Adrenal gland (tissue), 19 donors: ENCODE measurements at regions of chr19 and their contacts with region 1.

Region 1: DNA sequence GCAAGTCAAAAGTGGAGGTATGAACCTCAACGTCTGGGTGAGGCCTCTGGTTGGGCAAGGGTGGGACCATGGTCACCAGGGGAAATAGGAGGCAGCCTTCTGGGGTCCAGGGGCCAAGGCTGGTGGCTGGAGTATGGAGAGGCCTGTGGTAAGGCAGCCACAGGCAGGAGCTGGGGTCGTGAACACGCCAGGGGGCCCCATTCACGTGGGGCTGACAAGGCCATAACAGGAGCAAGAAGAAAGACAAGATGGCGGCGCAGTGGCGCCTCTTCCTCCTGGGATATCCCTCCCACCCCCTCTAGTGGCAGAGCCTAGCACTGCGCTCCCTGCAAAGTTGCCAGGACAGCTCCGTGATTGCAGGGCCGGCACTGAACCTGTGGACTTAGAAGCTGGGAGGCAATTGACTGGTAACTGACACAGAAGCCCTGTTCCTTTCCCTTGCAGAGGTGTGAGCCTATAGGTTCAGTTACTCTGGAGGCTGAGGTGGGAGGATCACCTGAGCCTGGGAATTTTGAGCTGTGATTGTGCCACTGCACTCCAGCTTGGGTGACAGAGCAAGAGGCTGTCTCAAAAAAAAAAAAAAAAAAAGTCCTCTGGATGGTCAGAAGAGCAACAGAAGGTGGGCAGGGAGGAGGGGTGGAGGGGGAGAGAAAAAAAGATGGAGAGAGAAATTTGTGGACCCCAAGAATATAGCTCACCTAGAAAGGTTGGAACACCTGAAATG is 19.7 kb upstream of the EDDM13 start:
- DNase-seq: peak; percentile 80 to 91 (median 88)
- H3K4me3 ChIP-seq: no peak overlapping the region
- H3K27ac ChIP-seq: no peak overlapping the region
- H3K4me1 ChIP-seq: no peaks in the 10 kb centered on the region
- H3K27me3 ChIP-seq: no peaks in the 10 kb centered on the region
- CTCF ChIP-seq: peak; percentile 80 to 90 (median 88)
- POLR2A ChIP-seq: no peak

Region 2: GRCh38 chr19:56291867-56292266 is 39.0 kb after region 1 on chr19:
- intact Hi-C with region 1: no loop called
- DNase-seq: no peak
- H3K4me3 ChIP-seq: no peak overlapping the region
- H3K27ac ChIP-seq: no peak overlapping the region
- H3K4me1 ChIP-seq: no peaks in the 10 kb centered on the region
- H3K27me3 ChIP-seq: no peaks in the 10 kb centered on the region
- CTCF ChIP-seq: no peak
- POLR2A ChIP-seq: no peak

Region 3: DNA sequence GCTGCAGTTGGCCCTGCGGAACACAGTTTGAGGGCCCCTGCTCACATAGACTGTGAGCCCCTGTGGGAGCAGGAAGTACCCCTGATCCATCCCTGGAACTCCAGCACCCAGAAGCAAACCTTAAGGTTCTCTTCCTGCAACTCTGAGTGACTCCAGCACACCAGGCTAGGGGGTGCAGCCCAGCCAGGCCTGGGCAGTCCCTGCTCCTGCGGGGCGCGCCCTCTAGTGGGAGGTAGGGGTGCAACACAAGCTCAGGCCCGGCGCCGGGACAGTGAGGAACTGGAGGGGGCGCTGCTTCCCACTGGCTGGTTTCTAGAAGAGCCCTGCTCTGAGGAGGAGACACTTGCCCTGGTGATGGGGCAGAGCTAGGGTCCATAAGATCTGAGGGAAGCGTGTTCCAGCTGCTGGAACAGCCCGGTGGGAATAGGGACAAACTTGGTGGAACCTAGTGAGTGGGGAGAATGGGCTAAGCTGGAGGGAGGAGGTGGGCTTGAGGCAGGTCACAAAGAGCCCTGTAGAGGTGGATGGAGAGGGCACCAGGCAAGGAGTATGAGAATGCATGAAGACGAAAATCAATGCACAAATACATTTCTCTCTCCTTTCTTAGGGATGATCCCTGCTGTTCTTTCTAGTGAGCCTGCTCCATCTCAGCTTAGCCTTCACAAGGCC is 56.8 kb after region 1 on chr19:
- intact Hi-C with region 1: loop called in 1 of 2 experiments (anchors 10 kb)
- DNase-seq: peak; percentile 39 to 71 (median 63)
- H3K4me3 ChIP-seq: no peak overlapping the region
- H3K27ac ChIP-seq: no peak overlapping the region
- H3K4me1 ChIP-seq: peaks cover 0 to 16% of the 10 kb centered on the region in 2 donors
- H3K27me3 ChIP-seq: no peaks in the 10 kb centered on the region
- CTCF ChIP-seq: peak; percentile 58 to 68 (median 66)
- POLR2A ChIP-seq: no peak

Region 4: DNA sequence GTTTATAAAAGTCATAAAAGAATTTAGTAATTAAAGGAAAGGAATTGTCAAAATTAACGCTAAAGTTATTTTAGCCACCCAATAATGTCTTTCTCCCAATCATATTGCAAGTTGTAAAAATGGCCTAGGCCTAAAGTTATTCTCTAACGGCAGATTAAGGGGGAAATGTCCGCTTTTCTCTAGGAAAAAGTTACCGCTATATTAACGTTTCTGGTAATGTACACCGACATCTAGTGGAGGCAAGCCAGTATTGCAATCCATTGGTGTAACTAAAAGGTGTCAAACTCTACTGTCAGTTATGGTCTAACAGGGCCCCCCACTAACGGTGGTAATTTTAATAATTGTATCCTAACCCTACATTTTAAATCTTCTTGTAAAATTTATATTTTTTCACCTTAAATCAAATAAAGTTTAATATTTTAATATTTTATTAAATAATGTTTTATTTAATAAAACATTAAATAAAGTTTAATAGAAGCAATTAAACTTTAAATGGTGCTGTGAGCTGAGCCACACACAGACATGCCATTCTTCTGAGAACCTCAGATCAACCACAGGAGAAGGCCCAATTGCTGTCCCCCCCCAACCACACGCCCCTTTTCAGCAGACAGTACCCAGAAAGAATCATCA is 97.7 kb after region 1 on chr19:
- intact Hi-C with region 1: loop called in 1 of 2 experiments (anchors 5 kb)
- DNase-seq: peak in 6 of 7 donors; percentile 16 to 72 (median 44)
- H3K4me3 ChIP-seq: no peak overlapping the region
- H3K27ac ChIP-seq: no peak overlapping the region
- H3K4me1 ChIP-seq: no peaks in the 10 kb centered on the region
- H3K27me3 ChIP-seq: no peaks in the 10 kb centered on the region
- CTCF ChIP-seq: peak; percentile 55 to 87 (median 70)
- POLR2A ChIP-seq: no peak